ENCODE measurements at regions of chr3 and their contacts with region 1.

Region 1: GRCh38 chr3:191329654-191330528 is at the start of gene UTS2B:
- DNase-seq: peak; percentile 52 to 55
- H3K4me3 ChIP-seq: peak within 1 kb of the TSS; percentile 56 to 98 (median 84)
- H3K27ac ChIP-seq: peak within 1 kb of the TSS; percentile 90 to 97 (median 96)
- H3K4me1 ChIP-seq: peaks cover 23 to 32% of the 10 kb centered on the region in 2 donors
- H3K27me3 ChIP-seq: no peaks in the 10 kb centered on the region
- CTCF ChIP-seq: no peak
- POLR2A ChIP-seq: no peak
- total RNA-seq, gene UTS2B: 0.27 to 2.0 (median 1.4) TPM in 3 of 4 donors, not detected in the other

Region 2: DNA sequence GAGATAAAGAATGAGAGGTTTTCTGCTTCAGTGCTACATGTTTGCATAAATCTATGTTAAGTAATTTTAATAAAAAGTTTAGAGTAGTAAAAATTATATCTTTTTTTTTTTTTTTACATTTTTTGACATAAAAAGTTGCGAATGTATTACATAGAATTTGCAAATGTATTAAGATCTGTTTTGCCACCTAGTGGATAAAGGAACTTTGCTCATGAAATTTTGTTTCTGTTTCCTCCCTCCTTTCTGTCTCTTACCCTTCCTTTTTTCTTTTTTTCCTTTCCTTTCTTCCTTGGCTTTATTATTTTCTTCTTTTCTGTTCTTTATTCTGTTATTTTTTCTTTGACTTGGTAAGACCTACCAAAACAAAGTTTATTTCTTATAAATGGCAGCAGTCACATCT is 58.9 kb after region 1 on chr3:
- intact Hi-C with region 1: loop called (anchors 10 kb)
- DNase-seq: no peak
- H3K4me3 ChIP-seq: no peak overlapping the region
- H3K27ac ChIP-seq: peak overlapping the region in 1 of 3 donors; percentile 78
- H3K4me1 ChIP-seq: peaks cover 0 to 8% of the 10 kb centered on the region in 2 donors
- H3K27me3 ChIP-seq: no peaks in the 10 kb centered on the region
- CTCF ChIP-seq: peak in 2 of 6 experiments; percentile 24 to 29
- POLR2A ChIP-seq: no peak

Region 3: DNA sequence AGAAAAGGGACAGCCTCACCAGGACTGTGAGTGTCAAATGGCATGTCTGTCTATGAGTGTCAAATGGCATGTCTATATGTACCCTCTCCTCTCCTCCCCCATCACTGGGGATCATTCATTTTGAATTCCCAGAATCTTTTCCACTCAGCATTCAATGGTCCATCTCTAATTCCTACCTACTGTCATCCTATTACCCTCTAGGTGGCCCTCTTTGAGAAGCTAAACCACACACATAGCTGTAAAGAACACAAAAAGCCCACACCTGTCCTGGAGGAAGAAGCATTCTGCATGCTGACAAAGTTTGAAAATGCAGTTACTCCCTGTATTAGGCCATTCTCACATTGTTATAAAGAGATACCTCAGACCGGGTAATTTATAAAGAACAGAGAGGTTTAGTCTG is 84.8 kb after region 1 on chr3:
- intact Hi-C with region 1: no loop called
- DNase-seq: no peak
- H3K4me3 ChIP-seq: no peak overlapping the region
- H3K27ac ChIP-seq: no peak overlapping the region
- H3K4me1 ChIP-seq: peaks cover 0 to 4% of the 10 kb centered on the region in 2 donors
- H3K27me3 ChIP-seq: no peaks in the 10 kb centered on the region
- CTCF ChIP-seq: no peak
- POLR2A ChIP-seq: no peak